AG04449 (cell line): ENCODE measurements at regions of chr15 and their contacts with region 1.

Region 1: GRCh38 chr15:68335251-68335650 is 57.7 kb downstream of the FEM1B start:
- DNase-seq: no peak
- H3K4me3 ChIP-seq: no peak overlapping the region
- CTCF ChIP-seq: no peak

Region 2: GRCh38 chr15:68352401-68353062 is 17.3 kb after region 1 on chr15:
- CTCF ChIA-PET with region 1: interaction called, 4 read pairs
- POLR2A ChIA-PET with region 1: interaction called, 14 read pairs
- DNase-seq: peak; percentile 93
- H3K4me3 ChIP-seq: no peak overlapping the region
- CTCF ChIP-seq: no peak

Region 3: DNA sequence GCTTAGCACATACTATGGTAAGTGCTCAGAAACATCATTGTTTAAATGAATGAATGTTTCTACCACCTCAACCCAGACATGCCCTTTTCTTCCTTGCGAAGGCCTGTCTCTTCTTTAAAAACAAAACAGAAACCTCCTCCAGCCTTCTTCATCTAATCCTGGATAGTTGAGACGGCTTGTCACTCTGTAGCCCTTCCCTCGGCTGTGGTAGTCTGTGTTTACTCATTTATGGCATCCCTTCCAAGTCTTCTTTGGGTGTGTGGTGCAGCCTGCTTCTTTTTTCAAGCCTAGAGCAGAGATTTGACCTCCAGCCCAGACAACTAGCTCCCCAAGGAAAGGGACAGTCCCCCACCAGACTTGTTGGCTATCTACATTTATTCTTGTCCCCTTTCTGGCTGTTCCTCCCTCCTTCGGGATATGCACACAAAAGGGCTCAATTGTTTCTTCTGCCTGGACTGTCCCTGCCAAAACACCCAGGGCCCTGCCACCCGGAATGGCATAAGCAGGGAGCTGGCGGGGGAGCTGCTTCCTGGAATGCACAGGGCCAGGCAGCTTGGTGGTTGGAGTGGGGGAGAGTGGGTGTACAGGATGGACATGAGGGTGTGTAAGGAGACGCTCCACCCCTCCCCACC is 28.9 kb after region 1 on chr15:
- CTCF ChIA-PET with region 1: no interaction called
- POLR2A ChIA-PET with region 1: no interaction called
- DNase-seq: no peak
- H3K4me3 ChIP-seq: no peak overlapping the region
- CTCF ChIP-seq: no peak

Region 4: DNA sequence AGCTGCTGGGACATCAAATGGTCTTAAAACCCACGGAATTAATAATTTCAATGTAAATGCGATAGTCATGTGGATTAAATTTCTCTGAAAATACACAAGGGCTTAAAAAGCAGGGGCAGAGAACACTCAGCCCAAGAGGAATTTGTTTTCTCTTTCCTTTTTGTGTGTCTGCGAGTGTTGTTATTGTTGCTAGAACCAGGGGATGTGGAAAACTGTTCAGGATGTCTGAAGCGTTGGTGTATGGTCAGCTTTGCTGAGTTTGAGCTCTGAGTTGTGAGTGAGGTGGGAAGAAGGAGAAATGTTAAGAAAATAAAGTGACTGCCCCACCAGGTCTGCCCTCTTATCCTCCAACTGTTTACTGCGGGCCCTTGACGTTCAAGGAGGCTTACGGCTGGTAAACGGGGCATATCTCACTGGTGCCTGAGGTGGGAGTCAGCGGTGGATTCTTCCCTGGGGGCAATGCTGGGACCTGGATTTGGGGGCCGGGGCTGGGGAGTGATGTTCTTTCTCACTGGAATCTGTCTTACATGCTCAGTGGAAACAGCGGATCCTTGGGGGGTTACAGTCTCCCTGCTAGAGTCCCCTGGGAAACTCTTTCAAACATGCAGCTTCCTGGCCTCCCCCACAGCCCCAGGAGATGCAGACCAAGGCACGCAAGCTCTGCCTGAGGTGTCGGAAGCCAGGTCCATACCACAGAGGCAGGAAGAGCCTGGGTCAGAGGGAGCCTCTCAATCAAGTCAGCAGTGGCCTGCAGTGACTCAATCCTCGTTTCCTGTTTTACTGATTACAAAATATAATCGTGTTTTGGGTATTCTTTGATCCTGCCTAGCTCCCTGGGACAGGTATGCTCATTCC is 54.9 kb after region 1 on chr15:
- CTCF ChIA-PET with region 1: no interaction called
- POLR2A ChIA-PET with region 1: no interaction called
- DNase-seq: peak; percentile 16
- H3K4me3 ChIP-seq: no peak overlapping the region
- CTCF ChIP-seq: no peak